Endothelial cell of umbilical vein (primary cell): ENCODE measurements at regions of chr6 and their contacts with region 1.

Region 1: DNA sequence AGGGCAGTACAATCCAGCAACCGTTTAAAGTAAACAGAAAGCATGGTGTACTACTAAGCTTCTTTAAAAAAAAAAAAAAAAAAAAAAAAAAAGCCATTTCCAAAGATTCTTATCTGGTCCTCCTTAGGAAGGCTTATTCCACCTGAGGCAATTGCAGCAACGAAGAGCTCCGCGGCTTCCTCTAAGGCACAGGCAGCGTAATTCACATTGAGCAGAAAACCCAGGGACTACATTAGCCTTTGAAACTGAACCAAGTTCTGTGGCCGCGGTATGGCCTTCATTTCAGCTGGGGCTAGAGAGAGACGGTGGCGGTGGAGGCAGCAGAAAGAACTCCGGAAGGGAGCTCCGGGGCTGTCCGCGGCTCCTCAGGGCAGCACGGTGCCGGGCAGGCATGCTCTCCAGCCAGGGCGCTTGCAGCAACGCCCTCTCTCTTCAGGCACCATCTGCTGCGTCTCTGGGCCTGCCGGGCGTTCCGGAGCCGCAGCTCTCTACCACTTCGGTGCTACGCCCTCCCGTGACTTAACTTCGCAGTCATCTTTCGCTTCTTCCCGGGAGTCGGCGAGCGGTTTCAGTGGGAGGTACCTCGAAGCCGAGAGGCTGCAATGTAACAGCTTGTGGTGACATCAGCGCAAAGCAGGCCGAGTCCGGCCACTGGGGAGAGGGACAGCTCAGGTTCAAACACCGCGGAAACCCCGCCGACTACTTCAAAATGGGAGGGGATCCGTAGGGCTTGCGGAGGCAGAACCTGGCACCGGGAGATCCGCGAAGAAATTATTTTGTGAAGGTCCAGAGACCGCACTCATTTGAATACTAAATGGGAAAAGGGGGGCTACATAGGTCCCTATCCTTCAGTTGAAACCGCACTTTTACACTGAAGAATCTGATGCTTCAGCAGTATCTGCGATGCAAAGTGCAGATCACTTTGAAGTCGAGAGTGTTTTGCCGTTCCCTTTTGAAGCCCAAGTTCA is 100.0 kb downstream of the DST start:
- DNase-seq: peak; percentile 97
- H3K4me3 ChIP-seq: peak overlapping the region; percentile 41 to 84 (median 66)
- H3K27ac ChIP-seq: peak overlapping the region; percentile 80
- H3K4me1 ChIP-seq: peaks cover 41% of the 10 kb centered on the region
- H3K27me3 ChIP-seq: no peaks in the 10 kb centered on the region
- CTCF ChIP-seq: peak in 1 of 2 donors; percentile 22
- POLR2A ChIP-seq: peak; percentile 82

Region 2: DNA sequence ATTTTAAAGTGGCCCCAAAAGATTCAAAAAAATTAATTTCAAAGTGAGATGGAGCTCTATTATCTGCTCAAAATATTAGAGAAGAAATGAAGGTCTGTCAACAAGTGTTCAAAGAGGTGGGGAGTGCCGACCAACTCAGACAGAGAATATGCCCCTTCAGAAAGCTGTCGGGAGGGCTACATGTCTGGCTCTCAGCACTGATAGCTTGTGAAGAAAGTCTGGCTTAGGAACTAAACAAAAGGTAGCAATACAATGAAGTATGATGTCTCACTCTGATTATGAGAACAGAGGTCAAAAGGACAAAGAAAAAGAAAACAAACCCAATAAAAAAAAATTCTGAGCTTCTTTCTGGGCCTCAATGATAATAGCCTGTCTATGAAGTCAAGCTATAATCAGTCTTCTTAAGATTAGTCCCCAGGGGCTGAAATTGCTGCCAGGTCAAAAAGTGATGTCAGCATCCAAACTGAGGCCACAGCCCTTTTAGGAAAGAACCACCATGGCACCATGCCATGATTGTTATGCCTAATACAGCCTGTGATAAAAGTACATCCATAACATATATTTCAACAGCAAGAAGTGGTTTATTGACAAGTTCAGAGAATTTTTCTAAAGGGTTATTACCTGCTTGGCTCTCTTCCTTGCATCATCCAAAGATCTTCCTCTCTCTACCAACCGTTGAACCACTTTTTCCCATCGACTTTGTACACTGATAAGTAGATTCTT is 50.9 kb before region 1 on chr6:
- CTCF ChIA-PET with region 1: interaction called, 13 read pairs
- POLR2A ChIA-PET with region 1: interaction called, 4 read pairs
- dilution Hi-C with region 1: no loop called
- intact Hi-C with region 1: loop called (anchors 2 kb)
- DNase-seq: peak; percentile 88
- H3K4me3 ChIP-seq: no peak overlapping the region
- H3K27ac ChIP-seq: peak overlapping the region; percentile 89
- H3K4me1 ChIP-seq: peaks cover 26% of the 10 kb centered on the region
- H3K27me3 ChIP-seq: no peaks in the 10 kb centered on the region
- CTCF ChIP-seq: no peak
- POLR2A ChIP-seq: no peak

Region 3: GRCh38 chr6:56524891-56525703 is 17.6 kb before region 1 on chr6:
- CTCF ChIA-PET with region 1: interaction called, 21 read pairs
- POLR2A ChIA-PET with region 1: interaction called, 5 read pairs
- dilution Hi-C with region 1: no loop called
- intact Hi-C with region 1: loop called (anchors 2 kb)
- DNase-seq: no peak
- H3K4me3 ChIP-seq: no peak overlapping the region
- H3K27ac ChIP-seq: no peak overlapping the region
- H3K4me1 ChIP-seq: peaks cover 4% of the 10 kb centered on the region
- H3K27me3 ChIP-seq: no peaks in the 10 kb centered on the region
- CTCF ChIP-seq: no peak
- POLR2A ChIP-seq: no peak

Region 4: GRCh38 chr6:56581296-56581925 is 38.8 kb after region 1 on chr6:
- CTCF ChIA-PET with region 1: no interaction called
- POLR2A ChIA-PET with region 1: interaction called, 13 read pairs
- dilution Hi-C with region 1: no loop called
- intact Hi-C with region 1: no loop called
- DNase-seq: peak; percentile 30
- H3K4me3 ChIP-seq: no peak overlapping the region
- H3K27ac ChIP-seq: no peak overlapping the region
- H3K4me1 ChIP-seq: peaks cover 5% of the 10 kb centered on the region
- H3K27me3 ChIP-seq: no peaks in the 10 kb centered on the region
- CTCF ChIP-seq: no peak
- POLR2A ChIP-seq: no peak